HepG2 (cell line): ENCODE measurements at regions of chr3 and their contacts with region 1.

Region 1: DNA sequence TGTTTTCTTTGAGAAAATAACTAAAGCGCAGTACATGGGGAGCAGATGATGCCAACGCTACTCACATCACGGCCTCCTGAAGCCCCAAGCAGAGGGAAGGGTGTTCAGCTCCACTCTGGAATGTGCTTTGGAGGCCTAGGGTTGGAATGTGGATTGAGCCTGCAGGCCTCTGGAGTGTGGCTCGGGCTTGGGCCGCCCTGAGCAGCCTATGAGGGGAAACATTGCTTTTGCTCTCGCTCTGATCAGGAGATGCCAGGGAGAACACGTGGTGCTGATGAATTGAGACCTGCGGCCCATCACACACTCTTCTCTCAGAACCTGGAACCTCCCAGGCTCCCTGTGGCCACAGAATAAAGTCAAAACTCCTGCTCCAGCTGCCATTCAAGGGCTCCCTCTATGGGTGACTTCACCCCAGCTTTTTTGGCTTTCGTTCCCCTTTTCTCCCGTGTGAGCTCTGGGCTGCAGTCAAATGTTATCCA is 23.3 kb downstream of the CCDC13 start:
- DNase-seq: no peak
- ATAC-seq: peak; percentile 76
- H3K4me3 ChIP-seq: no peak overlapping the region; a peak in 1 of 6 replicates
- H3K27ac ChIP-seq: no peak overlapping the region
- H3K4me1 ChIP-seq: peaks cover 54% of the 10 kb centered on the region
- H3K27me3 ChIP-seq: no peaks in the 10 kb centered on the region
- CTCF ChIP-seq: peak; percentile 64
- EP300 ChIP-seq: no peak
- POLR2A ChIP-seq: no peak
- RAD21 ChIP-seq: peak; percentile 49

Region 2: GRCh38 chr3:42572278-42572677 is 177.5 kb before region 1 on chr3:
- CTCF ChIA-PET with region 1: interaction called, 9 read pairs
- POLR2A ChIA-PET with region 1: no interaction called
- in situ Hi-C with region 1: no loop called
- intact Hi-C with region 1: loop called (anchors 1 kb)
- DNase-seq: peak; percentile 62
- ATAC-seq: peak; percentile 100
- H3K4me3 ChIP-seq: no peak overlapping the region
- H3K27ac ChIP-seq: no peak overlapping the region
- H3K4me1 ChIP-seq: no peaks in the 10 kb centered on the region
- H3K27me3 ChIP-seq: no peaks in the 10 kb centered on the region
- CTCF ChIP-seq: peak; percentile 83
- EP300 ChIP-seq: no peak
- POLR2A ChIP-seq: no peak
- RAD21 ChIP-seq: peak; percentile 49; the same call in 1 of the 2 replicates

Region 3: DNA sequence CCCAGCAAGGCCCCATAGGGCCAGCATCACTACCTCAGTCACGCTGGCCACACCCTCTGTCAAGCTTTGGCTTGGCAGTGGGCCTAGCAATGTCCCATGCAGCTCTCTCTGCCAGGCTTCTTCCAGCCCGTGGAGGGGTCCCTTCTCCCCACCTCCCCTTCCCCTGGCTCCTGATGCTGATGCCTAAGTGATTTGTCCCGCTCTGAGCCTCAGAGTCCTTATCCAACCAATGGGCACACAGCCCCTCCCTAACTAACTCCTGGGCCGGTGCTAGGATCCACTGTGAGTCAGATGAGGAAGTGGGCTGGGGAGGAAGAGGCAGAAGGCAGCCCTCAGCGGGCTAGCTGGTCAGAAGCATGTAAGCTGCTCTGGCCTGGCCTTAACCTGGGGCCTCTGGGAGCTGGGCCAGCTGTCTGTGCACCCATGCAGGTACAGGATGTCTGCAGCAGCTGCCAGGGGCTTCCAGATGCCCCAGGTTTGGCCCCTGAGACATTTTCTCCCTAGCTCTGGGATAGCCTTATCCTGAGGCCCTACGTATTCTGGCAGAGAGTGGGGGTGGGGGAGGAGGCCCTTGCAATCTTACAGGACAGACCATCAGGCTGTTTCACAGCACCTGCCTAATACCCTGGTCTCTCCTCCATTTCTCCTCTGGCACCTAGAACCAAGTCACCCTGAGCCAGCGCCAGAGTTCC is 97.0 kb before region 1 on chr3:
- CTCF ChIA-PET with region 1: no interaction called
- POLR2A ChIA-PET with region 1: interaction called, 3 read pairs
- in situ Hi-C with region 1: loop called (anchors 5 kb)
- intact Hi-C with region 1: loop called (anchors 5 kb)
- DNase-seq: peak; percentile 29
- ATAC-seq: peak; percentile 32
- H3K4me3 ChIP-seq: peak overlapping the region; percentile 71 to 89 (median 83); a peak in 5 of 6 replicates
- H3K27ac ChIP-seq: no peak overlapping the region
- H3K4me1 ChIP-seq: peaks cover 57% of the 10 kb centered on the region
- H3K27me3 ChIP-seq: no peaks in the 10 kb centered on the region
- CTCF ChIP-seq: no peak
- EP300 ChIP-seq: no peak
- POLR2A ChIP-seq: no peak
- RAD21 ChIP-seq: no peak

Region 4: DNA sequence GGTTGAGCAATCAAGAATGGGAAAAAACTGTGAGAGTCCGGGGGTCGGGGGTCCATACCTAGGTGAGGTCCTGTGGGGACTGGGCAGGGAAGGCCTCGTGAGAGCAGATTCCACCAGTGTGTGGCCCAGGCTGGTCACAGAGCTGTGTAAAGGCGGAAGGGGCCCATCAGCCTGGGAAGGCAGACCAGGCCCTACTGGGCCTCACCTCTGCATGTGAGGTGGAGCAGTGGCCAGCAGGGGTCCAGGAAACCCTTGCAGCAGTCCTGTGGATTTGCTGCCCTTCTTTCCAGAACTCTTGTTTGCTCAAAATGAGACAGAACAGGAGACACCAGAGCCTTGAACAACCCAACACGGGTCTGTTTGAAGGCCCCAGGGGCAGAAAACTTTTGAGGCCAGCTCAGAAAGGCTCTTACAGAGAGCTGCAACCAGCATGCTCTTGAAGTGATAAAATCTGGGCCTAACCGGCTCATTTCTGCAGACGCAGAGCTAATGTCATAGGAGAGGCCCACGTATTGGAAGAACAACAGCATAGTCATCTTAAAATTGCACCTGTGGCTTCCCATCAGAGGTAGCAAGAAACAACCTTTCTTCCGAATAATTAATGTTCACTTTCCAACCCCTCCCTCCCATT is 16.8 kb before region 1 on chr3:
- CTCF ChIA-PET with region 1: interaction called, 5 read pairs
- POLR2A ChIA-PET with region 1: interaction called, 18 read pairs
- in situ Hi-C with region 1: no loop called
- intact Hi-C with region 1: loop called (anchors 1 kb)
- DNase-seq: peak; percentile 81
- ATAC-seq: peak; percentile 91
- H3K4me3 ChIP-seq: peak overlapping the region in 1 of 3 experiments; percentile 22; a peak in 2 of 6 replicates
- H3K27ac ChIP-seq: peak overlapping the region; percentile 97
- H3K4me1 ChIP-seq: peaks cover 64% of the 10 kb centered on the region
- H3K27me3 ChIP-seq: no peaks in the 10 kb centered on the region
- CTCF ChIP-seq: peak; percentile 77
- EP300 ChIP-seq: peak in 1 of 2 experiments; percentile 20; a peak in 1 of 4 replicates
- POLR2A ChIP-seq: no peak; a peak in 2 of 4 replicates
- RAD21 ChIP-seq: peak; percentile 71

Region 5: DNA sequence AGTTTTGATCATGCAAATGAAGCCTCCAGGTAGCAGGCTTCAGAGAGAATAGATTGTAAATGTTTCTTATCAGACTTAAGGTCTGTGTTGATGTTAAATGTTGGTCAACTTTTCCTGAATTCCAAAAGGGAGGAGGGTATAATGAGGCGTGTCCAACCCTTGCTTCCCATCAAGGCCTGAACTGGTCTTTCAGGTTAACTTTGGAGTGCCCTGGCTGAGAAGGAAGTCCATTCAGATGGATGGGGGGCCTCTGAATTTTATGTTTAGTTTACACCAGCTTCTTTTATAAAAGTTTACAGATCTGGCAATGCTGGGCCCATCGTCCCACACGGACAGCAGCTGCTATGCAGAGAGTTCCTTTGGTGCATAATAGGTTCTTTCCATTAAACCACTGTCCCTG is 14.3 kb after region 1 on chr3:
- CTCF ChIA-PET with region 1: no interaction called
- POLR2A ChIA-PET with region 1: no interaction called
- in situ Hi-C with region 1: no loop called
- intact Hi-C with region 1: no loop called
- DNase-seq: no peak
- ATAC-seq: no peak
- H3K4me3 ChIP-seq: no peak overlapping the region
- H3K27ac ChIP-seq: no peak overlapping the region
- H3K4me1 ChIP-seq: peaks cover 36% of the 10 kb centered on the region
- H3K27me3 ChIP-seq: no peaks in the 10 kb centered on the region
- CTCF ChIP-seq: no peak
- EP300 ChIP-seq: no peak
- POLR2A ChIP-seq: no peak
- RAD21 ChIP-seq: no peak